PC-3 (cell line): ENCODE measurements at regions of chr2 and their contacts with region 1.

Region 1: GRCh38 chr2:101188683-101189405 is 37.7 kb upstream of the TBC1D8 start:
- DNase-seq: peak; percentile 71
- ATAC-seq: peak; percentile 86
- H3K4me3 ChIP-seq: no peak overlapping the region
- H3K27ac ChIP-seq: no peak overlapping the region
- H3K4me1 ChIP-seq: 0 out of 2 replicates have a peak, but pooled peaks cover 6% of the 10 kb centered on the region
- H3K27me3 ChIP-seq: no peaks in the 10 kb centered on the region
- CTCF ChIP-seq: peak; percentile 84

Region 2: GRCh38 chr2:101057051-101057933 is 131.6 kb before region 1 on chr2:
- CTCF ChIA-PET with region 1: no interaction called
- POLR2A ChIA-PET with region 1: no interaction called
- intact Hi-C with region 1: no loop called
- DNase-seq: no peak
- ATAC-seq: peak; percentile 57
- H3K4me3 ChIP-seq: no peak overlapping the region
- H3K27ac ChIP-seq: peak overlapping the region; percentile 56
- H3K4me1 ChIP-seq: peaks cover 12% of the 10 kb centered on the region; the same call in 1 of the 2 replicates
- H3K27me3 ChIP-seq: no peaks in the 10 kb centered on the region
- CTCF ChIP-seq: no peak

Region 3: GRCh38 chr2:101094351-101094750 is 94.5 kb before region 1 on chr2:
- CTCF ChIA-PET with region 1: no interaction called
- POLR2A ChIA-PET with region 1: interaction called, 13 read pairs
- intact Hi-C with region 1: no loop called
- DNase-seq: no peak
- ATAC-seq: no peak
- H3K4me3 ChIP-seq: no peak overlapping the region
- H3K27ac ChIP-seq: no peak overlapping the region
- H3K4me1 ChIP-seq: no peaks in the 10 kb centered on the region
- H3K27me3 ChIP-seq: no peaks in the 10 kb centered on the region
- CTCF ChIP-seq: no peak

Region 4: DNA sequence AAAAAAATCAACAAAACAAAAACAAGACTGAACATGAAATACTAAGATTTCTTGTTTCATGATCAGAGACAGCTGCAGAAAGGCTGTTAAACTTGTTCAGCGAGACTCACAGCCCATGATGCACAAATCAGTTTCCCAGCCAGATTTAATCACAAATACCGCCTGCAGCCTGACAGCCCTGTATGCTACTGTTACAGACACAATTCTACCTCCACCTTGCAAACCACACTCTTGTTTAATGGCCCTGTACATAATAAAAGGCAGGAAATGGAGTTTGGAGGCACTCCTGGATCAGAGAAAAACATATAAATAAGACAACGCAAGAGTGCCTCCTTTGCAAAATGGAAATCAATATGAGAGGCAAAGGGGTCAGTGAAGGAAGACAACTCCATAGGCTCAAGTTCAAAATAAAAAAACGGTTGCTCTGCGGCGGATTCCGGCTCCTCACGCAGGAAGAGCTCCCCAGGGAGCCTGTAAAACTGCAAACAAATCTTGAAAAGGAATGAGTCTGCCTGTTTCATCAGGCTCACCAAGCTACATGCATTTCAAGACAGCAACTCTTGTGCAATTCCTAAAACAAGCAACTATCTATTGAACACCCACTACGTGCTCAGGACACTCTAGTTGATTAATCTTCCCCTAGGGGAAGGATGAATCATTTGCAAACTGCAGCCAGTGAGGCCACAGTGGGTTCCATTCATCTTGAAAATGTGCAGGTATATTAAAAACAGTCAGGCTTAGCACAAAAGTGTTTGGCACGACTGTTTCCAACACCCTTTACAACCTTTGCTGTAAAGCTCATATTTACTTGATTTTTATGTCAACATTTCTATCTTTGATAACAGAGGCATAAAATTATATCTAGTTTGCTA is 75.2 kb before region 1 on chr2:
- CTCF ChIA-PET with region 1: no interaction called
- POLR2A ChIA-PET with region 1: no interaction called
- intact Hi-C with region 1: no loop called
- DNase-seq: peak; percentile 90
- ATAC-seq: peak; percentile 73
- H3K4me3 ChIP-seq: peak overlapping the region; percentile 40; the same call in 1 of the 2 replicates
- H3K27ac ChIP-seq: peak overlapping the region; percentile 94
- H3K4me1 ChIP-seq: peaks cover 61% of the 10 kb centered on the region
- H3K27me3 ChIP-seq: no peaks in the 10 kb centered on the region
- CTCF ChIP-seq: no peak

Region 5: GRCh38 chr2:101168706-101169105 is 20.1 kb before region 1 on chr2:
- CTCF ChIA-PET with region 1: no interaction called
- POLR2A ChIA-PET with region 1: no interaction called
- intact Hi-C with region 1: no loop called
- DNase-seq: no peak
- ATAC-seq: no peak
- H3K4me3 ChIP-seq: no peak overlapping the region
- H3K27ac ChIP-seq: no peak overlapping the region
- H3K4me1 ChIP-seq: no peaks in the 10 kb centered on the region
- H3K27me3 ChIP-seq: no peaks in the 10 kb centered on the region
- CTCF ChIP-seq: no peak

Region 6: DNA sequence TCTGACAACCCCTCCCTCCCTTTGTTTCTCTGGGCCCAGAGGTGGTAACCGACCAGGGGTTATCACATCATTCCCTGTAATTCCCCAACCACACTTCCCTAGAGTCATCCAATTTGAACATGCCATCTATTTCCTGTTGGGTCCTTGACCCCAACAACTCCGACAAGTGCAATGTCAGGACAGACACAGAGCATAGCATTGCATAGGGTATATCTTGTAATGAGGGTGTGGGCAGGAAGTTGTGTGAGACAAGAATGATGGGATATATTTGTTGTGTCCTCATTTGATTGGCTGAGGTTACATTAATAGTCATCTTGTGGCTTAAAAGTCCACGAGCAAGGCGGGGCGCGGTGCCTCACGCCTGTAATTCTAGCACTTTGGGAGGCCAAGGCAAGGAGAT is 30.4 kb after region 1 on chr2:
- CTCF ChIA-PET with region 1: interaction called, 10 read pairs
- POLR2A ChIA-PET with region 1: no interaction called
- intact Hi-C with region 1: no loop called
- DNase-seq: no peak
- ATAC-seq: no peak
- H3K4me3 ChIP-seq: no peak overlapping the region
- H3K27ac ChIP-seq: no peak overlapping the region
- H3K4me1 ChIP-seq: no peaks in the 10 kb centered on the region
- H3K27me3 ChIP-seq: no peaks in the 10 kb centered on the region
- CTCF ChIP-seq: no peak